ENCODE measurements at regions of chr11 and their contacts with region 1.

Region 1: GRCh38 chr11:133403900-133404299 is 128.4 kb downstream of the OPCML start:
- ATAC-seq: no peak
- H3K4me3 ChIP-seq: no peak overlapping the region
- H3K27ac ChIP-seq: no peak overlapping the region
- H3K4me1 ChIP-seq: peaks cover 16 to 28% of the 10 kb centered on the region in 2 donors

Region 2: GRCh38 chr11:133064152-133064877 is 339.6 kb before region 1 on chr11:
- in situ Hi-C with region 1: no loop called
- ATAC-seq: peak; percentile 87 to 95 (median 94)
- H3K4me3 ChIP-seq: peak overlapping the region in 4 of 5 donors; percentile 24 to 40 (median 32)
- H3K27ac ChIP-seq: peak overlapping the region; percentile 43 to 45
- H3K4me1 ChIP-seq: peaks cover 8 to 14% of the 10 kb centered on the region in 2 donors

Region 3: GRCh38 chr11:133506023-133506422 is 102.1 kb after region 1 on chr11:
- in situ Hi-C with region 1: loop called in 1 of 9 experiments (anchors 25 kb)
- ATAC-seq: no peak
- H3K4me3 ChIP-seq: no peak overlapping the region
- H3K27ac ChIP-seq: no peak overlapping the region
- H3K4me1 ChIP-seq: peaks cover 48 to 60% of the 10 kb centered on the region in 2 donors

Region 4: DNA sequence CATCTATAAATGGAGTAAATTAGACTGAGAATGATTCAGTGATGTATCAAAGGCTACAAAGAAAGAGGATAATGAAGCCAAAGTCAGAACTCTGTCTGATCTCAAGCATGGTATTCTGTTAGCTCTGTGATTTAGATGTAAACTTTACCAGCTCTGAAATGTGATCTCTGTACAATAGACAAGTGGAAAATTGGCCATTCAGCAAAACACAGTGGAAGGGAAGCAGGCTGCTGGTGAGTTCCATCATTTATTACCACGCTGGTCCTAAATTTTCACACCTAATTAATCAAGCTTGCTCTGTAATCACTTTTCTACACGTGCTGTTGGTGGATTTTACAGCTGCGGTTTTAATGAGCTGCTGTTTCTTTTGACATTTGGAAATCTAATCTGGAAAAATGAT is 273.5 kb after region 1 on chr11:
- in situ Hi-C with region 1: no loop called
- ATAC-seq: peak in 2 of 8 experiments; percentile 15 to 38
- H3K4me3 ChIP-seq: no peak overlapping the region
- H3K27ac ChIP-seq: no peak overlapping the region
- H3K4me1 ChIP-seq: peaks cover 25 to 38% of the 10 kb centered on the region in 2 donors

Measured in motor neuron (in vitro differentiated cells).